Endothelial cell of umbilical vein (primary cell): ENCODE measurements at regions of chr13 and their contacts with region 1.

Region 1: GRCh38 chr13:106373989-106374572 is 161.4 kb downstream of the EFNB2 start:
- DNase-seq: peak; percentile 48
- H3K4me3 ChIP-seq: no peak overlapping the region
- H3K27ac ChIP-seq: peak overlapping the region; percentile 66
- H3K4me1 ChIP-seq: peaks cover 40% of the 10 kb centered on the region
- H3K27me3 ChIP-seq: no peaks in the 10 kb centered on the region
- CTCF ChIP-seq: no peak
- POLR2A ChIP-seq: no peak

Region 2: GRCh38 chr13:105442941-105443340 is 931.1 kb before region 1 on chr13:
- CTCF ChIA-PET with region 1: no interaction called
- POLR2A ChIA-PET with region 1: no interaction called
- dilution Hi-C with region 1: no loop called
- intact Hi-C with region 1: loop called (anchors 10 kb)
- DNase-seq: peak; percentile 93
- H3K4me3 ChIP-seq: no peak overlapping the region
- H3K27ac ChIP-seq: peak overlapping the region; percentile 65
- H3K4me1 ChIP-seq: peaks cover 24% of the 10 kb centered on the region
- H3K27me3 ChIP-seq: no peaks in the 10 kb centered on the region
- CTCF ChIP-seq: no peak
- POLR2A ChIP-seq: no peak

Region 3: DNA sequence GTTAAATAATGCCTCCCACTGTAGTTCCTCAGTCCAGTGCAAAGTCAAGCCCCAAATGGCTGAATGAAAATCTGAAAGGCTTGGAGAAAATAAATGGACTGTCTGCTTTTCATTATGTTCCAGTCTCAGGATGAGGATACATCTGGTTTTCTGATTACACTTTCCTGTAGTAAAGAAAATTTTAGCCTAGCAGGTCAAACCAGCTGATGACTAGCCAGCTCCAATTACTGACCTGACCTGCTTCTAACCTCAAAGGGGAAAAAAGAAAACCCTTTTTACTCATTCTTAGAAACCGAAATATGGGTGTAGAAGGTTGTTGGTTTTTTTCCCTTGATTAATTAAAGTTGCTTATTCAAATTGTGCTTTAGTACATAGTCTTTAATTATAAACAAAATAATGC is 257.0 kb before region 1 on chr13:
- CTCF ChIA-PET with region 1: no interaction called
- POLR2A ChIA-PET with region 1: no interaction called
- dilution Hi-C with region 1: no loop called
- intact Hi-C with region 1: loop called (anchors 10 kb)
- DNase-seq: peak; percentile 93
- H3K4me3 ChIP-seq: no peak overlapping the region
- H3K27ac ChIP-seq: peak overlapping the region; percentile 74
- H3K4me1 ChIP-seq: peaks cover 52% of the 10 kb centered on the region
- H3K27me3 ChIP-seq: no peaks in the 10 kb centered on the region
- CTCF ChIP-seq: no peak
- POLR2A ChIP-seq: no peak

Region 4: DNA sequence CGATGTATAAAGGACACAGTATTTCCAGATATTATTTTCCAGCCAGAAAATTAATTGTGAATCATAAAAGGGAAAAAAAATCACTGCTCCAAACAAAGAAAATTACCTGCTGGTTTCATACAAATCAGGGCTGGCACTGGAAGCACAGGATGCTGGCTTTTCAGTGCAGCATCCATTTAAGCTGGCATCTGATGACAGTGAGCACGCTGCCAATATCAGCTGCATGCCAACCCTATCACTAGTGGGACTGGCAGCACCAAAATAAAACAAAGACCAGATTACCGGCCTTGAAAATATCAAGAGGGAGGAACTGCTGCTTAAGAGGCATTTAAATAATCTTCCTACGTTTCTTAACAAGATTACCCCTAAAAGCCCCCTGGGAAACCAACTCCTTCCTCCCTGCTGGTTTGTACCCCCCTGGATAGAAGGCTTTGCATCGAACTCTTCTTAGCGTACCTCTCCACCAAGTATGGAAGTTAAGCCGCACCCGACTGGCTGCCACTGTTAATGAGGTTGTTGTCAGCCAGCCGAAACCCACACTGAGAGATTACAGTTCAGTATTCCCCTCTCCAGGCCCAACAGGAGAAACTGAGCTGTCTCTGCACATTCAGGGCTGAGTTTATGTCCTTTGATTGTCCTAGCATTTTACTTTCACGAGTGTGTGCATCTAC is 96.5 kb before region 1 on chr13:
- CTCF ChIA-PET with region 1: no interaction called
- POLR2A ChIA-PET with region 1: no interaction called
- dilution Hi-C with region 1: no loop called
- intact Hi-C with region 1: no loop called
- DNase-seq: no peak
- H3K4me3 ChIP-seq: no peak overlapping the region
- H3K27ac ChIP-seq: no peak overlapping the region
- H3K4me1 ChIP-seq: no peaks in the 10 kb centered on the region
- H3K27me3 ChIP-seq: no peaks in the 10 kb centered on the region
- CTCF ChIP-seq: no peak
- POLR2A ChIP-seq: no peak

Region 5: DNA sequence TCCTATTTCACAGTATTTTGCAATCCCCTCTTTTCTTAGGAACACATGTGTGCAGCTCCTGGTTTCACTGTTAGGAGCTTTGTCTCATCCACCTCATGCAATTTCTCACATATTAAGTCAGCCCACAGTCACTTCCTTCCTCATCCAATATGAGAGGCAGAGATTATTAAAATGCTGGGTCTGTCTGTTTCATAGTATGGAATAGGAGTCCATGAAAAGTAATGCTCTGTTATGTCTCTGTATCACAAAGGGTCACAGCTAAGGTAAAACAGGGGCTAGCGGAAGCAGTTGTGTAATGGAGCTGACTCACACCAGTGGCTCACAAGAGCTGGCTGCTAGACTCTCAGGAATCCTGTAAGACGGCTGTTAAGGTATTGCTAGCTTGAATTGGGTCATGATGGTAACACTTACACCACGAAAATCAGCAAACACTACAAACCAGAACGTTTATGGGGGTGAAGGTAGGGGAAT is 55.1 kb before region 1 on chr13:
- CTCF ChIA-PET with region 1: no interaction called
- POLR2A ChIA-PET with region 1: no interaction called
- dilution Hi-C with region 1: no loop called
- intact Hi-C with region 1: loop called (anchors 2 kb)
- DNase-seq: peak; percentile 97
- H3K4me3 ChIP-seq: no peak overlapping the region
- H3K27ac ChIP-seq: peak overlapping the region; percentile 89
- H3K4me1 ChIP-seq: peaks cover 20% of the 10 kb centered on the region
- H3K27me3 ChIP-seq: no peaks in the 10 kb centered on the region
- CTCF ChIP-seq: no peak
- POLR2A ChIP-seq: peak; percentile 38

Region 6: GRCh38 chr13:106385654-106386053 is 11.6 kb after region 1 on chr13:
- CTCF ChIA-PET with region 1: no interaction called
- POLR2A ChIA-PET with region 1: no interaction called
- dilution Hi-C with region 1: no loop called
- intact Hi-C with region 1: no loop called
- DNase-seq: no peak
- H3K4me3 ChIP-seq: no peak overlapping the region
- H3K27ac ChIP-seq: no peak overlapping the region
- H3K4me1 ChIP-seq: no peaks in the 10 kb centered on the region
- H3K27me3 ChIP-seq: peaks cover 0 to 1% of the 10 kb centered on the region in 2 experiments
- CTCF ChIP-seq: no peak
- POLR2A ChIP-seq: no peak

Region 7: DNA sequence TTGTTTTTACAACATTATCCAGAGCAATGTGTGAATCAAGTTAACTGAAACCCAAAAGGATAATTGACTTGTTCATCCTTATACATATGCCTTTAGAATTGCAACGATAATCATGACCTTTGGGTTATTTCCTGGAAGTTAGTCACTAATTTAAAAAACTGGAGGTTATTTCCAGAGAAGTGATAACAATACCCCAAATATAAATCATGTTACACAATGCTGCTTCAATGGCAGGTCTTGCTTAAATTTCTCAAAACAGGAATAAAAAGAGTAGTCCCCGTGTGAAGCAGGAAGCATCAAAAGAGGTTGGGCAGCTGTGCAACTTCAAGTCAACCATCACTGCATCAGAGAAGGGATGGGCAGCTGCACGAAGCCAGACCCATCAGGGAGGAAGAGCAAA is 27.0 kb after region 1 on chr13:
- CTCF ChIA-PET with region 1: no interaction called
- POLR2A ChIA-PET with region 1: no interaction called
- dilution Hi-C with region 1: no loop called
- intact Hi-C with region 1: loop called (anchors 2 kb)
- DNase-seq: peak; percentile 77
- H3K4me3 ChIP-seq: no peak overlapping the region
- H3K27ac ChIP-seq: no peak overlapping the region
- H3K4me1 ChIP-seq: peaks cover 14% of the 10 kb centered on the region
- H3K27me3 ChIP-seq: no peaks in the 10 kb centered on the region
- CTCF ChIP-seq: no peak
- POLR2A ChIP-seq: no peak

Region 8: DNA sequence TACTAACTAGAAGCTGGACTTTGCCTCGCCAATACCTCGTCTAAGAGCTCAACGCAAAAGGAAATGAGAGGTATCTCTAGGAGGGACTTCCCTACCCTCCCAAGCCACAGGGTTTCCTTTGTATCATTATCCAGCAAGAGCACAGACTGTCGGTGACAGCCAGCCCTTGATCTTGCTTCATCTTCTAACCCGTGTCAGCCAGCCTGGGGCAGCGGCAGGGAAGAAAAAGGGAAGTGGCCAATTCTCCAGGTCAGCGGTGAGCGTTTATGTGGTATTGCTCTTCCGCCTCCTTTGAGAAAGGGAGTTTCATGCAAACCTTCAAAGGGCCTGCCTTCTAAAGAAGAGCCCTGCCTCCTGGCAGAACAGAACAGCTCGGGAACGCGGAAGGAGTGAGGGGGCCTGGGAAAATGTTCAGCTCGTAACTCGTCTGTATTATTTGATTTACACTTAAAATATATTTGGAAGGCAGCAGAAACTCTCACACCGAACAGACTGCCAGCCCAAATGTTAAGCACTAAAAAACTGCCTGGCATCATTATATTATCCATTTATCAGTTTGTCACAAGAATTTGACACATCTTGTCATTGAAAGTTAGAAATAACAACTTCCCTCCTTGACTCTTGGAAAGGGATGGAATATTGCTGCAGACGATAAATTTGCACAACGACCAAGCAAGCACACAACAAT is 119.6 kb after region 1 on chr13:
- CTCF ChIA-PET with region 1: no interaction called
- POLR2A ChIA-PET with region 1: no interaction called
- dilution Hi-C with region 1: no loop called
- intact Hi-C with region 1: loop called (anchors 1 kb)
- DNase-seq: no peak
- H3K4me3 ChIP-seq: no peak overlapping the region
- H3K27ac ChIP-seq: no peak overlapping the region
- H3K4me1 ChIP-seq: peaks cover 35% of the 10 kb centered on the region
- H3K27me3 ChIP-seq: no peaks in the 10 kb centered on the region
- CTCF ChIP-seq: no peak
- POLR2A ChIP-seq: no peak

Region 9: DNA sequence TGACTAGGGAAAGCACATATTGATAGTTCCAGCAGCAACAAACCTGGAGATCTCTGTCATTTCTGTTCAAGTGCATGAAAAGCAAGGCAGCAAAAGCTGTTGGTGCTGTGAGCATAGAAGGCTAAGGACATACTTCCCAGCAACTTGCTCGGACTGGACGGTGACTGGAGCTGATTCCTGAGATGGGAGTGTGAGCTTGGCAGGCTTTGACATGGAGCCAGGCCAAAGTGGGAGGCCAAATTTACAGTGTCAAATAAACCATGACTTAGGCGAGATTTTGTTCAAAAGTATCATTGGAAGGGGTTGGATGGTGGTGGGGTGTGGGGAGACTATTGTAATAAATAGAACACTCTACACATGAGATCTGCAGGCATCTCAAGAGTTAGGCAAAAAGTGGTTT is 199.8 kb after region 1 on chr13:
- CTCF ChIA-PET with region 1: no interaction called
- POLR2A ChIA-PET with region 1: no interaction called
- dilution Hi-C with region 1: no loop called
- intact Hi-C with region 1: no loop called
- DNase-seq: no peak
- H3K4me3 ChIP-seq: no peak overlapping the region
- H3K27ac ChIP-seq: no peak overlapping the region
- H3K4me1 ChIP-seq: no peaks in the 10 kb centered on the region
- H3K27me3 ChIP-seq: no peaks in the 10 kb centered on the region
- CTCF ChIP-seq: no peak
- POLR2A ChIP-seq: no peak

Region 10: DNA sequence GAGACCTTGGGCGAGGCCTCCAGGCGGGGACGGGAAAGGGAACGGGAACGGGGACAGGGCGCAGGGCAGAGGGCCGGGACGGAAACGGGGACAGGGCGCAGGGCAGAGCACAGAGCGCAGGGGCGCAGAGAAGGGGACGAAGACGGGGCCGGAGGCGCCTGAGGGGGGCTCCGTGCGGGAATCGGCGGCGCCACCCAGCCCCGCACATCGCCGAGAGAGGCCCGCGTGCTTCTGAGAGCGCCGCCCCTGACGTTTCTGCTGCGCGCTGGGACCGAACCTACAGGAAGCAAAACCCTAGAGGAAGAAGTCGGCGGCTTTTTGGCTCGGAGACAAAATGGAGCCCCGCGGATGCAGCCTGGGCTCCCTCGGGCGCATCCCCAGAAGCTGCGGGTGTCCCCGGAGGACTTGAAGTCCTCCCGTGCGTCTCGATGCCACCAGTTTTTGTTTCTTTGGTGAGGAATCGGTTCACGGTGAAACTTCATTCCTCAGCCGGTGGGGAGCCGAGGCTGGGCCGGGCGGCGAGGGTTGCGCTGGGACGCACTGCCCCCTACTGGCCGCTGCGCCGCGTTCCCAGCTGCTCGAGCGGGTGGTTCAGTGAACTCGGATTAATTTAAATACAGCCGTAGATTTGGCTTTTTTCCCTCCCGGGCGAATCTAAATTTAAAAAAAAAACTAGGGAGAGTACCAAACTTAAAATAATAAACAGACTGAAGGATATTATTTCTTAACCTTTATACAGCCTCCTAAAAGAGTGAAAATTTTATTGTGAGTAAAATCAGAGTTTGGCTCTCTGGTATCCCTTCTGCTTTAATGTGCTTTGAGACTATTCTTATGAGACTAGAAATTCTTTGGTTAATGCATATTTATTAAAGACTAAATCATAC is 543.8 kb after region 1 on chr13:
- CTCF ChIA-PET with region 1: no interaction called
- POLR2A ChIA-PET with region 1: no interaction called
- dilution Hi-C with region 1: no loop called
- intact Hi-C with region 1: no loop called
- DNase-seq: peak; percentile 91
- H3K4me3 ChIP-seq: peak overlapping the region; percentile 44 to 74 (median 51)
- H3K27ac ChIP-seq: peak overlapping the region; percentile 90
- H3K4me1 ChIP-seq: peaks cover 27% of the 10 kb centered on the region
- H3K27me3 ChIP-seq: peaks cover 7 to 13% of the 10 kb centered on the region in 2 experiments
- CTCF ChIP-seq: peak; percentile 92 to 97
- POLR2A ChIP-seq: peak; percentile 55